Stomach (tissue), 19 donors: ENCODE measurements at regions of chr9 and their contacts with region 1.

Region 1: DNA sequence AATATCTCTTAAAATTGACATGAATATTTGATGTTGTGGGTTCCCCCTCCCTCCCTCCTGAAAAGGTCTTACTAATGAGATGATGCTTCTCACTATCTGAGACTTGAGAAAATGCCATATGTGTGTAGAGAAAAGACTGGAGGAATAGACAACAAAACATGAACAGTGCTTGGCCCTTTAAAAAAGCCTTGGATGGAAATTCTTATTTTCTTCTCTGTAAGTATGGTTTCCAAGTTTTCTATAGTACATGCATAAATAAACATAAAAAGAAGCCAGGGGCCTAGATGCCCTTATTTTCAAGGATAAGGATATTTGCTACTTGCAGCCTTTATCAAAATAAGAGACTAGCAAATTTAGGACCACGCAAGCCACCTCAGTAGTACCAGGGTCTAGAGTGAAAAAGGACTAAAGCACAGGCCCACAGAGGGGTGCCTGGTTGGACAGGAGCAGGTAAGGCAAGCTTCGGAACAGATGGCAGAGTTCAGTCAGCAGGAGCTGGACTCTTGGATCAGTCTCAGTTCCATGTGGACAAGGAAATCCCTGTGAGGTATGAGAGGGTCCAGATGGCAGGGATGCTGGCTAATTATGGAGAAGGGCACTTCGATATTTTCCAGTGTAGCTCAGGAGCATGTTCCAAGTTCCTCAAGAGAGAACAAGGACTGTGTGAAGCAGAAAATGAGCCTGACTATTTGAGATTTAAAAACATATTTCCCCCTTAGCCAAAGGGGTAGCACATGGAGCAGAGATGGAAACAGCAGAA is 4.6 kb upstream of the ANP32B start:
- DNase-seq: no peak
- H3K4me3 ChIP-seq: no peak overlapping the region
- H3K27ac ChIP-seq: no peak overlapping the region
- H3K4me1 ChIP-seq: peaks cover 0 to 22% (median 16%) of the 10 kb centered on the region in 4 donors
- H3K27me3 ChIP-seq: no peaks in the 10 kb centered on the region
- CTCF ChIP-seq: no peak
- EP300 ChIP-seq: no peak
- POLR2A ChIP-seq: no peak

Region 2: DNA sequence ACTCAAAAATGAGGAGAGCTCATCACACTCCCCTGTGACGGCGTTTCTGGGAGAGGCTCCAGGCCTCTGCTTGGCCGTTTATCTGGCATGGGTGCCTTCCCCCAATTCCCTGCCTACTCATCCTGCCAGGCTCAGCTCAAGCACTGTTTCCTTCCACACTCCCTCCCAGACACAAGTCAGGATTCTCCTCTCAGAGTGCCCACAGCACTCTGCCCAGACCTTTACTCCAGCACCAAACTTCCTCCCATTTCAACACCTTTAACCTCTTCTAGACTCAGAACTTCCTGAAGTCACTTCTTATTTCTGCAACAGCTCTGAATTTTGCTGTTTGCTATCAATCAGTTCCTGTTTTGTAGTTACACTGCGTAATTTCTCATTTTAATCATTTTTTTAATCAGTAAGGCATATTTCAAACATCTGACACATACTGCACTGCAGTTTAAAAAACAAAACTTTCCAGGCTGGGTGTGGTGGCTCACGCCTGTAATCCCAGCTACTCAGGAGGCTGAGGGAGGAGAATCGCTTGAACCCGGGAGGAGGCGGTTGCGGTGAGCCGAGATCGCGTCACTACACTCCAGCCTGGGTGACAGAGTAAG is 72.2 kb before region 1 on chr9:
- intact Hi-C with region 1: no loop called
- DNase-seq: no peak
- H3K4me3 ChIP-seq: no peak overlapping the region
- H3K27ac ChIP-seq: peak overlapping the region in 4 of 5 donors; percentile 27 to 76 (median 48)
- H3K4me1 ChIP-seq: peaks cover 6 to 47% (median 25%) of the 10 kb centered on the region in 4 donors
- H3K27me3 ChIP-seq: no peaks in the 10 kb centered on the region
- CTCF ChIP-seq: no peak
- EP300 ChIP-seq: no peak
- POLR2A ChIP-seq: no peak

Region 3: GRCh38 chr9:98034593-98035546 is 56.3 kb after region 1 on chr9:
- intact Hi-C with region 1: loop called (anchors 10 kb)
- DNase-seq: peak; percentile 93
- H3K4me3 ChIP-seq: peak overlapping the region in 1 of 4 donors; percentile 4
- H3K27ac ChIP-seq: no peak overlapping the region
- H3K4me1 ChIP-seq: peaks cover 0 to 9% (median 3%) of the 10 kb centered on the region in 4 donors
- H3K27me3 ChIP-seq: peaks cover 0 to 2% (median 0%) of the 10 kb centered on the region in 3 donors
- CTCF ChIP-seq: peak in 5 of 7 experiments; percentile 67 to 87 (median 76)
- EP300 ChIP-seq: no peak
- POLR2A ChIP-seq: no peak